HEK293 (cell line): ENCODE measurements at regions of chr17 and their contacts with region 1.

Region 1: GRCh38 chr17:14826358-14826757 is 438.8 kb downstream of the PMP22 start:
- H3K4me3 ChIP-seq: no peak overlapping the region
- H3K27ac ChIP-seq: no peak overlapping the region
- H3K4me1 ChIP-seq: no peaks in the 10 kb centered on the region
- CTCF ChIP-seq: no peak

Region 2: DNA sequence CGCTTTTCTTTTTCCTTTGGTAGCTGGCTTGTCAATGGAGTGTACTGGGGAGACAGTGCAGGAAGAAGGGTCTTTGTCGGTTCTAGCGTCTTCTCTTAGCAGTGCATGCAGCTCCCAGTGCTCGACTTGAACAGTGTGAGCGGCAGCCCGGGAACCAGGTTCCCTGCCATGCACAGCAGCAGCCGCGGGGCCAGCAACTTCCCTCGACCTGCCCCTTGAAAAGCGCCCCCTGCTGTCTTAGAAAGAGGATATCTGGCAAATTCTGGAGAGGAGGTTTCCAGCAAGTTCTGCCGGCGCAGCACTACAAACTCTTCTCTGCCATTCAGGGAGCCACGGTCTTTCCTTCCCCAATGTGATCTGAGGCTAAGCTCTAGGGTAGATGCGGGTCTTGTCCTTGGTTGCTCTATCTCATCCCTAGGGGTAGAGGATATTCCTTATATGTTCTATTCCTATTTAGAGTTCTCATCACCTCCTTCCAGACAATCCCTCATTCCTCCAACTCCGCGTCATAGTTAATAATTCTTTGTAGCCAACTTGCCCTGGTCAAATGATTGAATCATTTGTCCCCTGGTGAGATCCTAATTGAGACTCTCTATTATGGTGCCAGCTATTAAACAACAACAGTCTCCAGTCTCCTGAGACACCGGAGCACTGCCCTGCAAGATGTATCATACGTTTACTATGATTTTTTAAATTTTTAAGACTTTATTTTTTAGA is 12.6 kb before region 1 on chr17:
- CTCF ChIA-PET with region 1: interaction called, 15 read pairs
- POLR2A ChIA-PET with region 1: interaction called, 3 read pairs
- H3K4me3 ChIP-seq: no peak overlapping the region
- H3K27ac ChIP-seq: no peak overlapping the region
- H3K4me1 ChIP-seq: no peaks in the 10 kb centered on the region
- CTCF ChIP-seq: no peak